ENCODE measurements at regions of chr18 and their contacts with region 1.

Region 1: DNA sequence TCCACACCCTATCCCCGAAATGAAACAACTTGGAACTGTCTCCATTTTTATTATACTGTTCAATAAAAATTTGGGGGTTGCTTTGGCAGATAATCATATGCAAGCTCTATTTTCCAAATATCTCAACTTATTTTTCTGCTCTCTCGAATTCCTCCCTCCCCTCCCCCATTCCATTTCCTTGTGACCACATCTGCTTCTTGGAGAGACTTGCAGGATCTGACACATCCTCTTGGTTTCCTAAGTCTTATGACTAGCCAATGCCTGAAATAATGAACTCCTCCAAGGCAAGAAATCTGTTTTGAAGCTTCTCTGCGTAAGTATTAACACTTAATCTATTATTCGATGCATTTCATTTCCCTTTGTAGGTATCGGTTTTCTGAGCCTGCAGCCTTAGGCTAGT is 16.1 kb downstream of the TGIF1 start:
- DNase-seq: no peak
- H3K4me3 ChIP-seq: no peak overlapping the region
- H3K27ac ChIP-seq: peak overlapping the region in 1 of 2 experiments; percentile 40; a peak in 2 of 4 replicates
- H3K4me1 ChIP-seq: peaks cover 0 to 15% of the 10 kb centered on the region in 2 experiments
- H3K27me3 ChIP-seq: no peaks in the 10 kb centered on the region
- CTCF ChIP-seq: no peak
- EP300 ChIP-seq: no peak
- RAD21 ChIP-seq: no peak

Region 2: GRCh38 chr18:2797951-2798350 is 668.1 kb before region 1 on chr18:
- CTCF ChIA-PET with region 1: no interaction called
- POLR2A ChIA-PET with region 1: no interaction called
- DNase-seq: no peak
- H3K4me3 ChIP-seq: no peak overlapping the region
- H3K27ac ChIP-seq: no peak overlapping the region
- H3K4me1 ChIP-seq: no peaks in the 10 kb centered on the region
- H3K27me3 ChIP-seq: no peaks in the 10 kb centered on the region
- CTCF ChIP-seq: no peak
- EP300 ChIP-seq: no peak
- RAD21 ChIP-seq: no peak

Region 3: DNA sequence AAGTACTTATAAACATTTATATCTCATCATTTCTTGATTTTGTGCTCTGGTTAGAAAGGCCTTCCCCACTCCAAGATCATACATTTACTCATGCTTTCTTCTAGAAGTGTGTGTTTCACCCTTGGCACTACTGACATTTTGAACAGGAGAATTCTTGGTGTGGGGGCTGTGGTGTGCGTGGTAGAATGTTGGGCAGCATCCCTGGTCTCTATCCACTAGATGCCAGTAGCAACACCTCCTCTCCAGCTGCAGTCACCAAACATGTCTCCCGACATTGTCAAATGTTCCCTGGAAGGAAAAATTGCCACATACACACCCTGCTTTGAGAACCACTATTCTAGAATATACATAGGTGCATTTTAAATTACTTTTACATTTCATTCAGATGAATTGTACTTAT is 24.8 kb before region 1 on chr18:
- CTCF ChIA-PET with region 1: no interaction called
- POLR2A ChIA-PET with region 1: no interaction called
- DNase-seq: peak; percentile 40
- H3K4me3 ChIP-seq: no peak overlapping the region
- H3K27ac ChIP-seq: no peak overlapping the region
- H3K4me1 ChIP-seq: peaks cover 3 to 4% of the 10 kb centered on the region in 2 experiments; a peak in 3 of 4 replicates
- H3K27me3 ChIP-seq: no peaks in the 10 kb centered on the region
- CTCF ChIP-seq: peak; percentile 43
- EP300 ChIP-seq: no peak
- RAD21 ChIP-seq: peak; percentile 70

Region 4: GRCh38 chr18:3454365-3455089 is 11.5 kb before region 1 on chr18:
- CTCF ChIA-PET with region 1: interaction called, 11 read pairs
- POLR2A ChIA-PET with region 1: interaction called, 3 read pairs
- DNase-seq: peak; percentile 51
- H3K4me3 ChIP-seq: peak overlapping the region; percentile 74 to 93
- H3K27ac ChIP-seq: peak overlapping the region; percentile 76 to 99
- H3K4me1 ChIP-seq: peaks cover 27 to 38% of the 10 kb centered on the region in 2 experiments; a peak in 3 of 4 replicates
- H3K27me3 ChIP-seq: no peaks in the 10 kb centered on the region
- CTCF ChIP-seq: peak; percentile 83
- EP300 ChIP-seq: no peak
- RAD21 ChIP-seq: peak; percentile 61

Measured in SK-N-SH (cell line).